ENCODE measurements at regions of chr6 and their contacts with region 1.

Region 1: DNA sequence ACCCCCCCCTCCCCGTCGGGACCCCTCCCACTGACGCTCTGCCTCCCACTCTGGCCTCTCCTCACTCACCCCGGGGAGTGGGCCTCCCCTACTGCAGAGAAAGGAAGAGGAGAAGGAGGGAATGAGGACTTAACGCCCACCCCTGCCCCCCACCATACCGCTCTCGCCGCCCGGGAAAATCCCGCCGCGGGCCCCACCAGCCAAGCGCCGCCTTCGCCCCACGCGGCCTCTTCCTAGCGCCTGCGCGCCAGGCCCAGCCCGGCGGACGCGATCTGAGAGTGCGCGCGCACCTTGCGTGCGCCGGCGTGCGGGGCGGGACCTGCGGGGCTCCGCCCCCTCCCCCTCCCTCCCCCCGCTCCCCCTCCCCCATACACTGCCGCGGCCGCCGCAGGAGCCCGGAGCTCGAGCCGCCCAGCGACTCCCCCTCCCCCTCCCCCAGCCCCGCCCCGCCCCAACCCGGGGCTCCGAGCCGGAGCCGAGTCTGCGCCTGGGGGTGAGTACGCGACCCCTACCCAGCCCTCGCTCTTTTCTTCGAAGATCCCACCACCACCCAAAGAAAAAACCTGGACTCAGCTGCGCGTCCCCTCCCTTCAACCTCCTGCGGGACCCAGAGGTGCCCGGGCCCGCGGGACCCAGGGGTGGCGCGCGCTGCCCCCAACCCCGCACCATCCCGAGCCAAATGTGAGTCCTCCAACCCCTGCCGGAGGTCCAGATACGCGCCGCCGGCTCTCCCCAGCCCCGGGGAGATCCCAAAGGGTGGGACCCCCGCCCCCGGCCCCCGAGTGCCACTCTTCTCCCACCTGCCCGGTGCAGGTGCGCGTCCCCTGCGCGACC is at the starts of genes MRPL14 and TMEM63B:
- DNase-seq: peak; percentile 89
- H3K4me3 Mint-ChIP-seq: peak within 1 kb of the TSS; percentile 90
- H3K27ac Mint-ChIP-seq: peak within 1 kb of the TSS; percentile 94
- H3K4me1 Mint-ChIP-seq: peaks cover 50% of the 10 kb centered on the region
- H3K27me3 Mint-ChIP-seq: no peaks in the 10 kb centered on the region
- total RNA-seq, gene MRPL14: 62.6 and 68.6 TPM in 2 replicates
- total RNA-seq, gene TMEM63B: 17.0 and 20.7 TPM in 2 replicates

Region 2: GRCh38 chr6:42777126-42777822 is 1350.1 kb before region 1 on chr6:
- intact Hi-C with region 1: loop called (anchors 10 kb)
- DNase-seq: no peak
- H3K4me3 Mint-ChIP-seq: no peak overlapping the region
- H3K27ac Mint-ChIP-seq: peak overlapping the region; percentile 57
- H3K4me1 Mint-ChIP-seq: peaks cover 68% of the 10 kb centered on the region
- H3K27me3 Mint-ChIP-seq: no peaks in the 10 kb centered on the region

Region 3: GRCh38 chr6:44078795-44079671 is 48.4 kb before region 1 on chr6:
- intact Hi-C with region 1: no loop called
- DNase-seq: peak; percentile 65
- H3K4me3 Mint-ChIP-seq: no peak overlapping the region
- H3K27ac Mint-ChIP-seq: no peak overlapping the region
- H3K4me1 Mint-ChIP-seq: peaks cover 21% of the 10 kb centered on the region
- H3K27me3 Mint-ChIP-seq: peaks cover 8% of the 10 kb centered on the region

Region 4: DNA sequence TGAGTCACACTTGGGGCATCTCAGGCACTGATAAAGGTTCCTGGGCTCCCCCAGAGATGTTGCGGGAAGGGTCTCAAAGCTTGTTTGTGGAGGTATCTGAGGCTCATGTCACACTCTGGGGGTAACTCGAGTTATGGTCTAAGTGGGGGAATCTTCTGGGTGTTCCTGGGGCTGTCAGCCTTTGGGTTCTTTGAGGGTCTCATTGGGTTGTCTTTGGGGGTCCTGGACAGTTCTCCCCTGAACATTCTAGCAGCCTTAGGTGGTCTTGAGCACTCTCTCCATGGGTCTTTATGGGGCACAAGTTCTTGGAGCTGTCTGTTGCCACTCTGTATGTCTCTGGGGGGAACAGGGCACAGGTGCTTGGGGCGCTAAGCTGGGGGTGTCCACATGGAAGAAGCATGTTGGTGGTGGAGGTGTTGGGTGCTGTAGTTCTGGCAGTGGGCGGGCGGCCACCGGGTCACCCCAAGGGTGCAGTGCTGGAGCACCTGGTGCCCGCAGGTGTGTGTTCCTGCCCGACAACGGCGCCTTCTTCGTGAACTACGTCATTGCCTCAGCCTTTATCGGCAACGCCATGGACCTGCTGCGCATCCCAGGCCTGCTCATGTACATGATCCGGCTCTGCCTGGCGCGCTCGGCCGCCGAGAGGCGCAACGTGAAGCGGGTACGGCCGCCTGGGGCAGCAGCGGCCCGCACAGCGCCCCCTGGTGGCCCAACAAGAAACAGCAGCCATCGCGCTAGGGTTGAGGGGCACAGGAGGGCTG is 24.1 kb after region 1 on chr6:
- intact Hi-C with region 1: loop called (anchors 1 kb)
- DNase-seq: peak; percentile 71
- H3K4me3 Mint-ChIP-seq: no peak overlapping the region
- H3K27ac Mint-ChIP-seq: no peak overlapping the region
- H3K4me1 Mint-ChIP-seq: peaks cover 12% of the 10 kb centered on the region
- H3K27me3 Mint-ChIP-seq: no peaks in the 10 kb centered on the region

Region 5: GRCh38 chr6:44237813-44238433 is 110.5 kb after region 1 on chr6:
- intact Hi-C with region 1: loop called (anchors 2 kb)
- DNase-seq: peak; percentile 79
- H3K4me3 Mint-ChIP-seq: peak overlapping the region; percentile 82
- H3K27ac Mint-ChIP-seq: peak overlapping the region; percentile 86
- H3K4me1 Mint-ChIP-seq: peaks cover 13% of the 10 kb centered on the region
- H3K27me3 Mint-ChIP-seq: no peaks in the 10 kb centered on the region

Region 6: GRCh38 chr6:44387346-44388133 is 260.1 kb after region 1 on chr6 and contains the start of gene CDC5L:
- intact Hi-C with region 1: loop called (anchors 1 kb)
- DNase-seq: peak; percentile 93
- H3K4me3 Mint-ChIP-seq: peak within 1 kb of the TSS; percentile 97
- H3K27ac Mint-ChIP-seq: peak within 1 kb of the TSS; percentile 99
- H3K4me1 Mint-ChIP-seq: peaks cover 40% of the 10 kb centered on the region
- H3K27me3 Mint-ChIP-seq: peaks cover 3% of the 10 kb centered on the region
- total RNA-seq, gene CDC5L: 28.1 and 28.4 TPM in 2 replicates

Measured in activated T-helper 1 cell treated with anti-CD3 and anti-CD28 coated beads, Interleukin-12 subunit alpha, Interleukin-12 subunit beta, Interleukin-2, Interleukin-4 antibody, amounts not matched to agents 30 ng/mL and 10 ng/mL and 1 ng/mL, durations not matched to agents 14 hours and 24 hours and 36 hours (primary cell).